ENCODE measurements at regions of chr5 and their contacts with region 1.

Region 1: GRCh38 chr5:157611571-157612476 is 36.2 kb upstream of the ADAM19 start:
- DNase-seq: peak; percentile 65 to 95 (median 78)
- H3K4me3 ChIP-seq: no peak overlapping the region
- H3K4me3 Mint-ChIP-seq: no peak overlapping the region
- H3K27ac ChIP-seq: no peak overlapping the region
- H3K27ac Mint-ChIP-seq: peak overlapping the region in 5 of 7 donors; percentile 2 to 62 (median 22)
- H3K4me1 ChIP-seq: peaks cover 26 to 53% of the 10 kb centered on the region in 2 donors
- H3K4me1 Mint-ChIP-seq: peaks cover 47% of the 10 kb centered on the region
- H3K27me3 ChIP-seq: no peaks in the 10 kb centered on the region
- H3K27me3 Mint-ChIP-seq: peaks cover 0 to 3% (median 1%) of the 10 kb centered on the region in 3 donors
- CTCF ChIP-seq: no peak

Region 2: DNA sequence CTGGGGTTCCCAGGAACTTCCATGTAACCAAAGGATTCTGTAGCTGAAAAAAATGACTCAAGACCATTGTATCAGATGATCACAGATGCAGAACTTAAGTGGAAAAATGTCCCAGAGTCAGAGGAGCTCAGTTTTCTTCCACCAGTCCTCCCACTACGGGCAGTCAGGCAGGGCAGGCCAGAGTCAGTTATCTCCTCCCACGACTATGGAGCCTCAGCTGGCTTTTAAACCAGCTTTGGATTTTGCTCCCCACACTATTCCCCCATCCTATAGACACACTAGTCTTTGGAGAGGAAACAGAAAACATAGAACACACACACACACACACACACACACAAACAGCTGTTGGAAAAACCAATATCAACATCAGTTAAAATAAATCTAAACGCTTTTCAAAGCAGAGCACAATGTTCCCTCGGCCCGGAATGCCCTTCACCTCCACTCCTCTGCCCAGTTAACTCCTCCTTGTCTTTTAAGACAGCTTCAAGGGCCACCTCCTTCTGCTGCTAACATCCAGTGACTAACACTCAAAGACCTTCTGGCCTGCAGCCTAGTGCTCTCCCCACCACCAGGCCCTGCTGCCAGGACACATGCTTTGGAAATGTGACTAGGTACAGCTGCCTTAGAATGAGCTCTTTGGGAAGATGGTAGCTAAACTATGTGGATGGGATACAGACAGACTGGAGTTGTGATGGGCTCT is 95.0 kb before region 1 on chr5:
- intact Hi-C with region 1: no loop called
- DNase-seq: no peak
- H3K4me3 ChIP-seq: no peak overlapping the region
- H3K4me3 Mint-ChIP-seq: no peak overlapping the region
- H3K27ac ChIP-seq: no peak overlapping the region
- H3K27ac Mint-ChIP-seq: peak overlapping the region in 1 of 7 donors; percentile 47
- H3K4me1 ChIP-seq: peaks cover 4 to 18% of the 10 kb centered on the region in 2 donors
- H3K4me1 Mint-ChIP-seq: peaks cover 16% of the 10 kb centered on the region
- H3K27me3 ChIP-seq: no peaks in the 10 kb centered on the region
- H3K27me3 Mint-ChIP-seq: peaks cover 1 to 3% (median 1%) of the 10 kb centered on the region in 3 donors
- CTCF ChIP-seq: no peak

Region 3: GRCh38 chr5:157563373-157563928 is 48.4 kb before region 1 on chr5:
- intact Hi-C with region 1: loop called (anchors 10 kb)
- DNase-seq: no peak
- H3K4me3 ChIP-seq: no peak overlapping the region
- H3K4me3 Mint-ChIP-seq: no peak overlapping the region
- H3K27ac ChIP-seq: no peak overlapping the region
- H3K27ac Mint-ChIP-seq: peak overlapping the region in 2 of 7 donors; percentile 70 to 82
- H3K4me1 ChIP-seq: peaks cover 76 to 89% of the 10 kb centered on the region in 2 donors
- H3K4me1 Mint-ChIP-seq: peaks cover 81% of the 10 kb centered on the region
- H3K27me3 ChIP-seq: no peaks in the 10 kb centered on the region
- H3K27me3 Mint-ChIP-seq: peaks cover 0 to 2% (median 2%) of the 10 kb centered on the region in 3 donors
- CTCF ChIP-seq: no peak

Region 4: DNA sequence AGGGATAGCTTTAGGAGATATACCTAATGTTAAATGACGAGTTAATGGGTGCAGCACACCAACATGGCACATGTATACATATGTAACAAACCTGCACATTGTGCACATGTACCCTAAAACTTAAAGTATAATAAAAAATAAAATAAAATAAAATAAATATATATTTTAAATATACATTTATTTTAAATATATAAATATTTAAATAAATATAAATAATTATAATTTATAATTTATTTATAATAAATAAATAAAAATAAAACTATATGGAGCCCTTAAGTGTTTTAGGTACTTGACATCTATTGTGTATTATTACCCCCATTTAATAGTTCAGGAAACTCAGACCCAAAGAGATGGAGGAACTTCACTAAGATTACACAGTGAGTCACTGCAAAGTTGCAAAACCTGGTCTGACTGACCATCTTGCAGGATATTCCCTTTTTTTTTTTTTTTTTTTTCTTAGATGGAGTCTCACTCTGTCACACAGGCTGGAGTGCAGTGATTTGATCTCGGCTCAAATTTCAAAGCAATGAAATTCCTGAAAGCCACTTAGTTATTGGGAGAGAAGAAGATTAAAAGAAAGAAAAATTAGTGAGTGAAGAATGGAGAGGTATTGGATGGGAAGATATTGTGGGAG is 53.8 kb after region 1 on chr5:
- intact Hi-C with region 1: loop called in 1 of 2 experiments (anchors 10 kb)
- DNase-seq: peak; percentile 84 to 97 (median 95)
- H3K4me3 ChIP-seq: no peak overlapping the region
- H3K4me3 Mint-ChIP-seq: peak overlapping the region in 1 of 2 donors; percentile 76
- H3K27ac ChIP-seq: peak overlapping the region in 1 of 2 donors; percentile 16
- H3K27ac Mint-ChIP-seq: peak overlapping the region; percentile 28 to 93 (median 83)
- H3K4me1 ChIP-seq: peaks cover 10 to 12% of the 10 kb centered on the region in 2 donors
- H3K4me1 Mint-ChIP-seq: peaks cover 18% of the 10 kb centered on the region
- H3K27me3 ChIP-seq: peaks cover 0 to 10% of the 10 kb centered on the region in 2 donors
- H3K27me3 Mint-ChIP-seq: peaks cover 14 to 26% (median 22%) of the 10 kb centered on the region in 3 donors
- CTCF ChIP-seq: no peak